ENCODE measurements at regions of chr18 and their contacts with region 1.

Region 1: GRCh38 chr18:24878289-24878688 is 417.9 kb downstream of the HRH4 start:
- DNase-seq: peak; percentile 8
- H3K4me3 ChIP-seq: no peak overlapping the region
- H3K27ac ChIP-seq: no peak overlapping the region
- H3K4me1 ChIP-seq: no peaks in the 10 kb centered on the region
- H3K27me3 ChIP-seq: no peaks in the 10 kb centered on the region
- CTCF ChIP-seq: peak; percentile 42 to 55

Region 2: DNA sequence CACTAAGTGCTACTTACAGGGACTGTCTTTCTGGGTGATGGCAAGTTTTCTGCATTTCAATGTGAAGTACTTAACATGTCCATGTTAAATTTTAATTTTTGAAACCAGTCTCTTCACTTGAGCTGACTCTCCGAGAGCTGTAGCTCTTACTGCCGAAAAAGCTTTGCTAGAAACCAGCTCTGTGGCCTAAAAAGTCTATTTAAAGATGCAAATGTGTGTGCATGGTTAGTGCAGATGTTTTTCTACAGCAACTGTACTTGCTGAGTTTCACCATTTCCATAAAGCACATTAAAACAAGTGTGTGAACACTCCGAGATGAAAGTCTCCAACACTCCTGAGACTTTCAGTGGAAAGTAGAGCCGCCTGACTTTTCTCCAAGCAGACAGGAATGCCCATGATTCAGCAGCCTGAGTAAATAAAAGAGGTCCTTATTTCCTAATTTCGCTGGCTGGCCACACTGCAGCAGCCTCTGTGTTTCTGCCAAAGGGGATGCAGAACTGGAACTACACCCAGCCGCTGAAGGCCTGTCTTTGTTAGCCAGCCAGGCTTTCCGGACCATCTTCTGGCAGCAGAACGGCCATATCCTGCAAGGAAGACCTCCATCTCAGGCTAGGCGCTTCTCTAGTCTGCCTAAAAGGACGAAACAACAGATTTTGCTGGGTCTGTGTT is 352.5 kb after region 1 on chr18:
- CTCF ChIA-PET with region 1: no interaction called
- dilution Hi-C with region 1: no loop called
- in situ Hi-C with region 1: no loop called
- intact Hi-C with region 1: loop called (anchors 10 kb)
- DNase-seq: peak; percentile 43
- H3K4me3 ChIP-seq: no peak overlapping the region
- H3K27ac ChIP-seq: no peak overlapping the region
- H3K4me1 ChIP-seq: no peaks in the 10 kb centered on the region
- H3K27me3 ChIP-seq: no peaks in the 10 kb centered on the region
- CTCF ChIP-seq: no peak

Region 3: GRCh38 chr18:25531207-25531606 is 652.9 kb after region 1 on chr18:
- CTCF ChIA-PET with region 1: no interaction called
- dilution Hi-C with region 1: no loop called
- in situ Hi-C with region 1: no loop called
- intact Hi-C with region 1: no loop called
- DNase-seq: no peak
- H3K4me3 ChIP-seq: no peak overlapping the region
- H3K27ac ChIP-seq: no peak overlapping the region
- H3K4me1 ChIP-seq: peaks cover 3% of the 10 kb centered on the region
- H3K27me3 ChIP-seq: no peaks in the 10 kb centered on the region
- CTCF ChIP-seq: no peak

Region 4: GRCh38 chr18:25561918-25562317 is 683.6 kb after region 1 on chr18:
- CTCF ChIA-PET with region 1: no interaction called
- dilution Hi-C with region 1: no loop called
- in situ Hi-C with region 1: no loop called
- intact Hi-C with region 1: loop called (anchors 5 kb)
- DNase-seq: peak; percentile 3
- H3K4me3 ChIP-seq: no peak overlapping the region
- H3K27ac ChIP-seq: no peak overlapping the region
- H3K4me1 ChIP-seq: no peaks in the 10 kb centered on the region
- H3K27me3 ChIP-seq: no peaks in the 10 kb centered on the region
- CTCF ChIP-seq: peak; percentile 19 to 53

Region 5: GRCh38 chr18:25832001-25832604 is 953.8 kb after region 1 on chr18:
- CTCF ChIA-PET with region 1: no interaction called
- dilution Hi-C with region 1: no loop called
- in situ Hi-C with region 1: no loop called
- intact Hi-C with region 1: loop called (anchors 2 kb)
- DNase-seq: peak; percentile 33
- H3K4me3 ChIP-seq: no peak overlapping the region
- H3K27ac ChIP-seq: no peak overlapping the region
- H3K4me1 ChIP-seq: peaks cover 17% of the 10 kb centered on the region
- H3K27me3 ChIP-seq: no peaks in the 10 kb centered on the region
- CTCF ChIP-seq: peak; percentile 83 to 87

Region 6: DNA sequence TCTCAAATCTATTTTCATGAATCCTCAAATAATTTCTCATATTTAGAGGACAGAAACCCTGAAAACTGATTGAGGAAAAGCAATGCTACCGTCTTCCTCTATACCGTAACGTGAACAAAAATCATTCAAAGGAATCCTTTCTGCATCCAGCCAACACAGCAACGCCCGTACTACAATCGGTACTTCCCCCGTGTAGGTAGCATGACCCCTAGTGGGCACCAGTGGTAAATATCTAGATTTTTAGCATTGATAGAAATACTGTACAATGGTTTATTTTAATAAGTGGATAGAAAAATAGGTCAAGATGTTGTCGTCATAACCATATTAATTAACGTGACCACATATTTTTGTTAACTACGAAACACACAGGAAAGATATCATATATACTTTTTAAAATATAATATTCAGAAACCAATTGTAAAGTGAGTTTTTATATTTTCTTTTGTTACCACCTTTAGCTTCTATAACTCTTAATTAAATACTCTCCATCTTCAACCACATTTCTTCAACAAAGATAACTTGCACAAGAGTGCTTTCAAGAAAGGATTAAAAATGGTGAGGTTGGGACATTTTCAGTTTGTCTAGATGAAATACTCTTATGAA is 1018.0 kb after region 1 on chr18:
- CTCF ChIA-PET with region 1: no interaction called
- dilution Hi-C with region 1: no loop called
- in situ Hi-C with region 1: no loop called
- intact Hi-C with region 1: loop called (anchors 2 kb)
- DNase-seq: peak; percentile 33
- H3K4me3 ChIP-seq: no peak overlapping the region
- H3K27ac ChIP-seq: no peak overlapping the region
- H3K4me1 ChIP-seq: no peaks in the 10 kb centered on the region
- H3K27me3 ChIP-seq: no peaks in the 10 kb centered on the region
- CTCF ChIP-seq: peak; percentile 67 to 88